CD8-positive, alpha-beta memory T cell (primary cell): ENCODE measurements at regions of chr6 and their contacts with region 1.

Region 1: GRCh38 chr6:31680840-31681671 is at the start of gene LY6G5C:
- DNase-seq: peak; percentile 33 to 72 (median 45)
- H3K4me3 ChIP-seq: peak within 1 kb of the TSS; percentile 66
- H3K4me3 Mint-ChIP-seq: peak within 1 kb of the TSS; percentile 80 to 97 (median 87)
- H3K27ac ChIP-seq: peak within 1 kb of the TSS; percentile 28
- H3K27ac Mint-ChIP-seq: peak within 1 kb of the TSS; percentile 32 to 93 (median 88)
- H3K4me1 ChIP-seq: peaks cover 10% of the 10 kb centered on the region
- H3K4me1 Mint-ChIP-seq: peaks cover 16 to 21% (median 16%) of the 10 kb centered on the region in 3 donors
- H3K27me3 ChIP-seq: no peaks in the 10 kb centered on the region
- H3K27me3 Mint-ChIP-seq: no peaks in the 10 kb centered on the region
- total RNA-seq, gene LY6G5C: 3.5 to 4.5 TPM

Region 2: GRCh38 chr6:31639449-31639861 is 41.6 kb before region 1 on chr6:
- CTCF ChIA-PET with region 1: no interaction called
- POLR2A ChIA-PET with region 1: no interaction called
- DNase-seq: no peak
- H3K4me3 ChIP-seq: no peak overlapping the region
- H3K4me3 Mint-ChIP-seq: no peak overlapping the region
- H3K27ac ChIP-seq: no peak overlapping the region
- H3K27ac Mint-ChIP-seq: peak overlapping the region in 4 of 8 donors; percentile 7 to 79 (median 39)
- H3K4me1 ChIP-seq: no peaks in the 10 kb centered on the region
- H3K4me1 Mint-ChIP-seq: peaks cover 0 to 1% (median 0%) of the 10 kb centered on the region in 3 donors
- H3K27me3 ChIP-seq: no peaks in the 10 kb centered on the region
- H3K27me3 Mint-ChIP-seq: no peaks in the 10 kb centered on the region

Region 3: DNA sequence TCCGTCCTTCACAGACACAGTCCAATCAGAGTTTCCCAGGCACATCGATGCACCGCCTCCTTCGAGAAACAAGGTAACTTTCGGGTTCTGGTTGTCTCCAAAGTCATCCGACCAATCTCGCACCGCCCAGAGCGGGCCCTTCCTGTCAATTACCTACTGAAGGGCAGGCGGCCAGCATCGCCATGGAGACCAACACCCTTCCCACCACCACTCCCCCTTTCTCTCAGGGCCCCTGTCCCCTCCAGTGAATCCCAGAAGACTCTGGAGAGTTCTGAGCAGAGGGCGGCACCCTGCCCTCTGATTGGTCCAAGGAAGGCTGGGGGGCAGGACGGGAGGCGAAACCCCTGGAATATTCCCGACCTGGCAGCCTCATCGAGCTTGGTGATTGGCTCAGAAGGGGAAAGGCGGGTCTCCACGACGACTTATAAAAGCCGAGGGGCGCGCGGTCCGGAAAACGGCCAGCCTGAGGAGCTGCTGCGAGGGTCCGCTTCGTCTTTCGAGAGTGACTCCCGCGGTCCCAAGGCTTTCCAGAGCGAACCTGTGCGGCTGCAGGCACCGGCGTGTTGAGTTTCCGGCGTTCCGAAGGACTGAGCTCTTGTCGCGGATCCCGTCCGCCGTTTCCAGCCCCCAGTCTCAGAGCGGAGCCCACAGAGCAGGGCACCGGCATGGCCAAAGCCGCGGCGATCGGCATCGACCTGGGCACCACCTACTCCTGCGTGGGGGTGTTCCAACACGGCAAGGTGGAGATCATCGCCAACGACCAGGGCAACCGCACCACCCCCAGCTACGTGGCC is 146.4 kb after region 1 on chr6 and contains the start of gene HSPA1B:
- CTCF ChIA-PET with region 1: interaction called, 12 read pairs
- POLR2A ChIA-PET with region 1: interaction called, 3 read pairs
- DNase-seq: peak; percentile 69 to 92 (median 81)
- H3K4me3 ChIP-seq: peak within 1 kb of the TSS; percentile 71
- H3K4me3 Mint-ChIP-seq: peak within 1 kb of the TSS; percentile 87 to 99 (median 96)
- H3K27ac ChIP-seq: peak within 1 kb of the TSS; percentile 89
- H3K27ac Mint-ChIP-seq: peak within 1 kb of the TSS; percentile 94 to 99 (median 96)
- H3K4me1 ChIP-seq: peaks cover 27% of the 10 kb centered on the region
- H3K4me1 Mint-ChIP-seq: peaks cover 41 to 54% (median 43%) of the 10 kb centered on the region in 3 donors
- H3K27me3 ChIP-seq: no peaks in the 10 kb centered on the region
- H3K27me3 Mint-ChIP-seq: peaks cover 0 to 4% of the 10 kb centered on the region in 2 donors
- total RNA-seq, gene HSPA1B: 80.9 to 81.4 TPM